Activated B cell treated with CpG ODN at 0.5 μM for 24 hours (primary cell): ENCODE measurements at regions of chr1 and their contacts with region 1.

Region 1: GRCh38 chr1:67149179-67149770 is 14.5 kb upstream of the C1orf141 start:
- DNase-seq: peak; percentile 23
- ATAC-seq: peak; percentile 87
- H3K4me3 Mint-ChIP-seq: no peak overlapping the region
- H3K27ac Mint-ChIP-seq: no peak overlapping the region
- H3K4me1 Mint-ChIP-seq: peaks cover 9% of the 10 kb centered on the region
- H3K27me3 Mint-ChIP-seq: peaks cover 8% of the 10 kb centered on the region
- CTCF ChIP-seq: no peak

Region 2: GRCh38 chr1:66705110-66705509 is 444.2 kb before region 1 on chr1:
- CTCF ChIA-PET with region 1: no interaction called
- POLR2A ChIA-PET with region 1: no interaction called
- intact Hi-C with region 1: no loop called
- DNase-seq: no peak
- ATAC-seq: no peak
- H3K4me3 Mint-ChIP-seq: no peak overlapping the region
- H3K27ac Mint-ChIP-seq: no peak overlapping the region
- H3K4me1 Mint-ChIP-seq: no peaks in the 10 kb centered on the region
- H3K27me3 Mint-ChIP-seq: peaks cover 6% of the 10 kb centered on the region
- CTCF ChIP-seq: no peak

Region 3: GRCh38 chr1:66764994-66765578 is 384.2 kb before region 1 on chr1:
- CTCF ChIA-PET with region 1: interaction called, 45 read pairs
- POLR2A ChIA-PET with region 1: interaction called, 3 read pairs
- intact Hi-C with region 1: loop called (anchors 1 kb)
- DNase-seq: no peak
- ATAC-seq: peak; percentile 25
- H3K4me3 Mint-ChIP-seq: no peak overlapping the region
- H3K27ac Mint-ChIP-seq: no peak overlapping the region
- H3K4me1 Mint-ChIP-seq: no peaks in the 10 kb centered on the region
- H3K27me3 Mint-ChIP-seq: no peaks in the 10 kb centered on the region
- CTCF ChIP-seq: no peak

Region 4: GRCh38 chr1:66996018-66996682 is 153.1 kb before region 1 on chr1:
- CTCF ChIA-PET with region 1: interaction called, 170 read pairs
- POLR2A ChIA-PET with region 1: interaction called, 3 read pairs
- intact Hi-C with region 1: loop called (anchors 1 kb)
- DNase-seq: peak; percentile 18
- ATAC-seq: peak; percentile 86
- H3K4me3 Mint-ChIP-seq: no peak overlapping the region
- H3K27ac Mint-ChIP-seq: no peak overlapping the region
- H3K4me1 Mint-ChIP-seq: peaks cover 10% of the 10 kb centered on the region
- H3K27me3 Mint-ChIP-seq: no peaks in the 10 kb centered on the region
- CTCF ChIP-seq: no peak

Region 5: DNA sequence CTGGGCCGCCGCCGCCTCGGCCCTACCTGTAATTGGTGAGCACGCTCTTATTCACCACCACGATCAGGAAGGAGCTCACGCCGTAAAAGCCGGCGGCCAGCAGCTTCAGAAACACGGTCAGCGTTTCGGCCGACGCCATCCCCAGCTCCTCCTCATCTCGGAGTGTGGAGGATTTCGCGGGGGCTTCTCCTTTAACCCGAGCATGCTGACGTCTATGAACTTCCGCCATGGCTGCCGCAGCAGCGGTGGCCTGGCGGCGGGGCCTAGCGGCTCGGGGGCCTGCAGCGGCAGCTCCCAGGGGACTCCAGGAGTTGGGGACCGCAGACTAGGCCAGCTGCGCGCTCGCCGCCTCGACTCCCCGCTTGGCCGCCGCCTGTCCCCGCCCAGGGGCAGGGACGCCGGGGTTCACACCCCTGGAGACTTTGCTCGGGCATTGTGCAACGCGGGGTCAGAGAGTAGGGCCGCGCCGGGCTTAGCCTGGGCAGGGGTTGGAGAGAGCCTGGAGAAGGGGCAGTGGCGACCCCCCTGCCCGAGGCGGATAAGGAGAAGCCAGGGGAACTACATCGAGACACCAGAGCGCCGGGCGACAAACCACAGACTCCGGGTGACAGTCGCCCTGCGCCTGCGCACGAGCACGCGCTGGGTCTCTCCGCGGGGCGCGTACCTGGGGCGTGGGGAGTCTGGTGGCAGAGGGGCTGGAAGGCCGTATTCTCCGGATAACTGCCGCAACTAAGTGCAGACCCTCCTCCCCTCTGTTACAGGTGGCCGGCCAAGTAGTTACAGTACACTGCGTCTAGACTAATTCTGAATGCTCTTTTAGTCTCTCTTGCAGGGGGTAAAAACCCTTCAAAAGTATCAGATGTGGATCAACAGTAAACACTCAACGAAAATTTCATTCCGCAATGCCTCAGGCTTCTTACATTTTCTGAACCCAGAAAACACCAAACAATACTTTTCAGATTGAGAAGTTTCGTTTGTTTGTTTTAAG is 95.2 kb before region 1 on chr1 and contains the start of gene SLC35D1:
- CTCF ChIA-PET with region 1: interaction called, 19 read pairs
- POLR2A ChIA-PET with region 1: interaction called, 9 read pairs
- intact Hi-C with region 1: loop called (anchors 1 kb)
- DNase-seq: peak; percentile 82
- ATAC-seq: peak; percentile 85
- H3K4me3 Mint-ChIP-seq: peak within 1 kb of the TSS; percentile 92
- H3K27ac Mint-ChIP-seq: peak within 1 kb of the TSS; percentile 92
- H3K4me1 Mint-ChIP-seq: peaks cover 21% of the 10 kb centered on the region
- H3K27me3 Mint-ChIP-seq: no peaks in the 10 kb centered on the region
- CTCF ChIP-seq: no peak
- total RNA-seq, gene SLC35D1: 10.1 and 11.1 TPM in 2 replicates

Region 6: DNA sequence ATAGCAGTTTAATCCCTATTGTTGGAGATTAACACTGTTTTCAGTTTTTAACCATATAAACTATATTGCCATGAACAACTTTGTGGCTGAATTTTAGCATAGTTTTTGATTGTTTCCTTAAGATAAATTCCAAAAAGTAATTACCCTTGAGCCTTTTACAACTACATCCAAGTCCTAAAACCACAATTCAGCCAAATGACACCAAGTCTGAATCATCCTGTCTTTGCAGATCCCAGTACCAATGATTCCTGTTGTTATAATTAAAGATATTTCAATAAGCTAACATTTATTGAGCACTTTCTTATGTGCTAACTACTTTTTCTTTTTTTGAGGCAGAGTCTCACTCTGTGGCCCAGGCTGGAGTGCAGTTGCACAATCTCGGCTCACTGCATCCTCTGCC is 52.6 kb after region 1 on chr1:
- CTCF ChIA-PET with region 1: no interaction called
- POLR2A ChIA-PET with region 1: no interaction called
- intact Hi-C with region 1: no loop called
- DNase-seq: no peak
- ATAC-seq: no peak
- H3K4me3 Mint-ChIP-seq: no peak overlapping the region
- H3K27ac Mint-ChIP-seq: no peak overlapping the region
- H3K4me1 Mint-ChIP-seq: no peaks in the 10 kb centered on the region
- H3K27me3 Mint-ChIP-seq: peaks cover 6% of the 10 kb centered on the region
- CTCF ChIP-seq: no peak

Region 7: DNA sequence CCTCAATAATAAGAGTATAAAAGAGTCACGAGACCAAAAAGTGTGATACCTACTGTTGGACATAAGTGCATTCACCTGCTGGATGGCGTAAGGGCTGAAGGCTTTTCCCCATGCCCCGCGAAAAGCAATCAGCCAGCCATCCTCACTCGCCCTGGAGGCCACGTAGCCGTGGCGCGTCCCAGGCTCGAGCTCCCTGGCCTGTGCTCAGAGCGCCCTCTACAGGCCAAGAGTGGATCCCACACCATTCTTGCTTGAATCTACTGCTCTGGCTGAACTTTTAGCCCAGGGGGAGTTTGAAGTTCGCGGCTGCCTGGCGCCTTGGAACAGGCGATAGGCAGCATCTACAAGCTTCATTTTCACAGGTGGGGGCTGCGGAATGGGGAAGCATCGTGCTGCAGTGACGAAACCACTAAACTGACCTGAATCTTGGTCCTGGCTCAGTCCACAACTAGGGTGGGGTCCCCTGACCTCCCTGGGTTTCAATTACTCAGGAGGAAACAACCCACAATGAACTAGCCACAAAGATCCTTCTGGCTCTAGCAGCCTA is 351.2 kb after region 1 on chr1:
- CTCF ChIA-PET with region 1: no interaction called
- POLR2A ChIA-PET with region 1: no interaction called
- intact Hi-C with region 1: loop called (anchors 5 kb)
- DNase-seq: peak; percentile 70
- ATAC-seq: peak; percentile 98
- H3K4me3 Mint-ChIP-seq: no peak overlapping the region
- H3K27ac Mint-ChIP-seq: no peak overlapping the region
- H3K4me1 Mint-ChIP-seq: peaks cover 4% of the 10 kb centered on the region
- H3K27me3 Mint-ChIP-seq: peaks cover 15% of the 10 kb centered on the region
- CTCF ChIP-seq: peak; percentile 80